CD14-positive monocyte (primary cell): ENCODE measurements at regions of chr3 and their contacts with region 1.

Region 1: DNA sequence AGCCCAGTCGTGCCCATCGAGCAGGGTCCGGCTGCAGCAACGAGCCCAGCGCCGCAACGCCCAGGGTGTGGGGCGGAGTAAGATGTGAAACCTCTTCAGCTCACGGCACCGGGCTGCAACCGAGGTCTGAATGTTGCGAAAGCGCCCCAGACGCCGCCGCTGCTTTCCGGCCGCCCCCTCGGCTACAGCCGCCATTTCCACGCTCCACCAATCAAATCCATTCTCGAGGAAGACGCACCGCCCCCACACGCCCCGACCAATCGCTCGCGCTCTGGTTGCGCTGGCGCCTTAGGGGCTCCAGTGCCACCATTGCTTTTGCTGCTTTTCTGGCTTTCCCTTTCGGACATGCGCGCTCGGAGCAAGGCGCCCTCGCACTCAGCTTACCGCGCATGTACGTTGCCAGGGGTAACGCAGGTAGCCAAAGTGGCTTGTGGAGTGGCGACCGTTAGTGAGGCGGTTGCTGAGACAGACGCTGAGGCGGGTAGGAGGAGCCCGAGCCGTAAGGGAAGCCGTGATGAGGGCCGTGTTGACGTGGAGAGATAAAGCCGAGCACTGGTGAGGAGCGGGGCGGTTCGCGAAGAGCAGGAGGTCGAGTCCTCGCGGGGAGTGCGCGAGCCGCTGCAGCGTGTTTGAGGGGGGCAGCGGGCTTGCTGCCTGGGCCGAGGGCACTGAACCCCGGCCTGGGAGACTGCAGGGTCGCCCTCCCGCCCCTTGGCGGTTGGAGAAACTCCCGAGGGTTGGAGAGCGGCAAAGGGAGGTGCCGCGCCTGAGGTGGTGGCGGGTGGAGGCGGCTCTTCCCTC is at the starts of genes IFT122 and MBD4:
- DNase-seq: peak; percentile 99
- H3K4me3 ChIP-seq: peak within 1 kb of the TSS; percentile 95 to 99 (median 99)
- H3K4me3 Mint-ChIP-seq: peak within 1 kb of the TSS; percentile 93 to 97
- H3K27ac ChIP-seq: peak within 1 kb of the TSS; percentile 97
- H3K27ac Mint-ChIP-seq: peak within 1 kb of the TSS; percentile 97 to 99 (median 98)
- H3K4me1 ChIP-seq: peaks cover 68 to 83% of the 10 kb centered on the region in 2 donors
- H3K4me1 Mint-ChIP-seq: peaks cover 81% of the 10 kb centered on the region
- H3K27me3 ChIP-seq: no peaks in the 10 kb centered on the region
- H3K27me3 Mint-ChIP-seq: peaks cover 0 to 2% (median 0%) of the 10 kb centered on the region in 3 donors
- CTCF ChIP-seq: no peak
- polyA plus RNA-seq, gene IFT122: 3.3 to 12.2 (median 3.6) TPM
- polyA plus RNA-seq, gene MBD4: 25.6 to 31.5 (median 30.1) TPM

Region 2: DNA sequence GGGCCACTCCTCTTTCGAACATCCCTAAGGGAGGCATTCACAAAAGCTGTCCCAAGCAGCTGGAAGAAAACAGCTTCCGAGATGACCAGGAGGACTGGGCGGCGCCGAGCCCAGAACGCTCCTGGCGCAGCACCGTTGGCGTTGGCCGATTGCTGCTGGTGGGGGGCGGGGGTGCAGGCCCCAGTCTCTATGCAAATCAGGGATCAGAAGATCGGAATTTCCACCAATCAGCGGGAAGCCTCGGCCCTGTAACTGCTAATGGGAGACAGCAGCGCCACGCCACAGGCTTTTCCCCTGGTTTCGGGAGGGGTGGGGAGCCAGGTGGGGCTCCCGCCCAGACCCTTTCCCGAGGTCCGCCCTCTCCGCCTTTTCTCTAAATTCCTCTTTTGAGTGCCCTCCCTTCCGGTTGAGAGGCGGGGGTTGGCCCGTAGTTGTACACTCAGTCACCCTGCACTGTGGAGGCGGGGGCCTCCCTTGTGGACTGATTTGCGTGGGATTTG is 134.4 kb before region 1 on chr3:
- intact Hi-C with region 1: no loop called
- DNase-seq: peak; percentile 56 to 70 (median 65)
- H3K4me3 ChIP-seq: peak overlapping the region; percentile 46 to 81 (median 56)
- H3K4me3 Mint-ChIP-seq: peak overlapping the region; percentile 81 to 89
- H3K27ac ChIP-seq: peak overlapping the region; percentile 43 to 69
- H3K27ac Mint-ChIP-seq: peak overlapping the region; percentile 60 to 90 (median 81)
- H3K4me1 ChIP-seq: peaks cover 38 to 46% of the 10 kb centered on the region in 2 donors
- H3K4me1 Mint-ChIP-seq: peaks cover 45% of the 10 kb centered on the region
- H3K27me3 ChIP-seq: no peaks in the 10 kb centered on the region
- H3K27me3 Mint-ChIP-seq: peaks cover 0 to 4% (median 3%) of the 10 kb centered on the region in 3 donors
- CTCF ChIP-seq: no peak

Region 3: GRCh38 chr3:129399895-129400357 is 40.1 kb before region 1 on chr3:
- intact Hi-C with region 1: loop called in 1 of 2 experiments (anchors 5 kb)
- DNase-seq: no peak
- H3K4me3 ChIP-seq: peak overlapping the region; percentile 68 to 93 (median 90)
- H3K4me3 Mint-ChIP-seq: peak overlapping the region; percentile 98 to 99
- H3K27ac ChIP-seq: peak overlapping the region in 1 of 2 donors; percentile 93
- H3K27ac Mint-ChIP-seq: peak overlapping the region in 5 of 7 donors; percentile 93 to 99 (median 98)
- H3K4me1 ChIP-seq: peaks cover 17 to 21% of the 10 kb centered on the region in 2 donors
- H3K4me1 Mint-ChIP-seq: peaks cover 22% of the 10 kb centered on the region
- H3K27me3 ChIP-seq: no peaks in the 10 kb centered on the region
- H3K27me3 Mint-ChIP-seq: peaks cover 0 to 2% (median 0%) of the 10 kb centered on the region in 3 donors
- CTCF ChIP-seq: peak; percentile 47